ENCODE measurements at regions of chr3 and their contacts with region 1.

Region 1: GRCh38 chr3:94269763-94270162 is 206.9 kb downstream of the NSUN3 start:
- DNase-seq: no peak
- ATAC-seq: no peak
- H3K4me3 Mint-ChIP-seq: no peak overlapping the region
- H3K27ac Mint-ChIP-seq: no peak overlapping the region
- H3K4me1 Mint-ChIP-seq: no peaks in the 10 kb centered on the region
- H3K27me3 Mint-ChIP-seq: no peaks in the 10 kb centered on the region

Region 2: GRCh38 chr3:94249585-94249984 is 20.2 kb before region 1 on chr3:
- CTCF ChIA-PET with region 1: interaction called, 11 read pairs
- POLR2A ChIA-PET with region 1: no interaction called
- intact Hi-C with region 1: no loop called
- DNase-seq: peak; percentile 82
- ATAC-seq: no peak
- H3K4me3 Mint-ChIP-seq: no peak overlapping the region
- H3K27ac Mint-ChIP-seq: no peak overlapping the region
- H3K4me1 Mint-ChIP-seq: no peaks in the 10 kb centered on the region
- H3K27me3 Mint-ChIP-seq: peaks cover 8% of the 10 kb centered on the region